ENCODE measurements at regions of chr16 and their contacts with region 1.

Region 1: GRCh38 chr16:84511180-84511824 is 6.8 kb upstream of the MEAK7 start:
- DNase-seq: no peak
- ATAC-seq: peak; percentile 88
- H3K4me3 ChIP-seq: peak overlapping the region in 1 of 2 experiments; percentile 26; a peak in 2 of 4 replicates
- H3K27ac ChIP-seq: no peak overlapping the region; the same call in 1 of the 2 replicates
- H3K4me1 ChIP-seq: peaks cover 9% of the 10 kb centered on the region
- H3K27me3 ChIP-seq: no peaks in the 10 kb centered on the region
- CTCF ChIP-seq: peak; percentile 89

Region 2: DNA sequence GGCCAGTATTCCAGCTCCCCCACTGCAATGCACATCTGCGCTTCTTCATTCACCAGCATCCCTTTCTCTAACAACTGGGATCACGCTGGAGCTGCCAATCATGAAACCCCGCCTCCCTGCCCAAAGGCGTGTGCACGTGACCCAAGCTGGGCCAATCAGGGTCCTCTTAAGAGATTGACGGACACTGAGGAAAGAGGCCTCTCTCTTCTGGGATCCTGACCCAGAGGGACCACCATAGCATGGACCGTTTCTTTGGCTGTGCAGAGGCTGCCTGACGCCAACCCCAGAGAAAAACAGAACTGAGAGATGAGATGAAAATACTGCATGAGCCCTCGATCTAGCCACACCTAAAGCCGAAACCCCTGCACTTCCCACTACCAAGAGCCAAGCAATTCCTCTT is 74.6 kb after region 1 on chr16:
- CTCF ChIA-PET with region 1: no interaction called
- POLR2A ChIA-PET with region 1: interaction called, 12 read pairs
- in situ Hi-C with region 1: no loop called
- intact Hi-C with region 1: no loop called
- DNase-seq: no peak
- ATAC-seq: peak; percentile 63; the same call in 1 of the 2 replicates
- H3K4me3 ChIP-seq: no peak overlapping the region
- H3K27ac ChIP-seq: no peak overlapping the region
- H3K4me1 ChIP-seq: peaks cover 4% of the 10 kb centered on the region; the same call in 1 of the 2 replicates
- H3K27me3 ChIP-seq: no peaks in the 10 kb centered on the region
- CTCF ChIP-seq: no peak

Region 3: GRCh38 chr16:84617791-84618580 is 106.7 kb after region 1 on chr16 and contains the start of gene COTL1:
- CTCF ChIA-PET with region 1: interaction called, 13 read pairs
- POLR2A ChIA-PET with region 1: no interaction called
- in situ Hi-C with region 1: no loop called
- intact Hi-C with region 1: loop called (anchors 1 kb)
- DNase-seq: peak; percentile 82
- ATAC-seq: peak; percentile 84
- H3K4me3 ChIP-seq: peak within 1 kb of the TSS; percentile 80 to 84
- H3K27ac ChIP-seq: peak within 1 kb of the TSS; percentile 87
- H3K4me1 ChIP-seq: peaks cover 31% of the 10 kb centered on the region
- H3K27me3 ChIP-seq: no peaks in the 10 kb centered on the region
- CTCF ChIP-seq: no peak
- total RNA-seq, gene COTL1: 302 TPM

Region 4: GRCh38 chr16:84754353-84754856 is 243.1 kb after region 1 on chr16:
- CTCF ChIA-PET with region 1: no interaction called
- POLR2A ChIA-PET with region 1: no interaction called
- in situ Hi-C with region 1: no loop called
- intact Hi-C with region 1: no loop called
- DNase-seq: no peak
- ATAC-seq: peak; percentile 94
- H3K4me3 ChIP-seq: no peak overlapping the region
- H3K27ac ChIP-seq: peak overlapping the region; percentile 29; the same call in 1 of the 2 replicates
- H3K4me1 ChIP-seq: peaks cover 15% of the 10 kb centered on the region
- H3K27me3 ChIP-seq: no peaks in the 10 kb centered on the region
- CTCF ChIP-seq: peak; percentile 80